HepG2 (cell line): ENCODE measurements at regions of chr3 and their contacts with region 1.

Region 1: DNA sequence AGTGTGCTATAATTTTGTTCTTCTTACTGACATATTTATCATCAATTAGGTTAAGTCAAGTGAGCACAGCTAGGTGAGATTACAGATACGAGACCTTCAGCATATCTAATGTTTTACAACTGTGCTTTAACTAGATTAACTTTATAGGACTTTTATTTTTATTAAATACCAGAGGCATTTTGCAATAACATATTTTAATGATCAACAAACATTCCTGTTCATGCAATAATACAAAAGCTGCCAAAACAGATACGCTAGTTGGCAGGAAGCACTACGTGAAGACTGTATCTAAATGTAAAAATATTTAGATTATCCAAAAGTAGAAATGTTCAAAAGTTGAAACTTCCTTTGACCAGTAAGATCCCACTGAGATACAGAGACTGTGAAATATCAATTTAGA is 139.1 kb downstream of the CBLB start:
- DNase-seq: no peak
- ATAC-seq: no peak
- H3K4me3 ChIP-seq: no peak overlapping the region
- H3K27ac ChIP-seq: no peak overlapping the region
- H3K4me1 ChIP-seq: no peaks in the 10 kb centered on the region
- H3K27me3 ChIP-seq: no peaks in the 10 kb centered on the region
- CTCF ChIP-seq: no peak
- EP300 ChIP-seq: no peak
- POLR2A ChIP-seq: no peak
- RAD21 ChIP-seq: no peak

Region 2: DNA sequence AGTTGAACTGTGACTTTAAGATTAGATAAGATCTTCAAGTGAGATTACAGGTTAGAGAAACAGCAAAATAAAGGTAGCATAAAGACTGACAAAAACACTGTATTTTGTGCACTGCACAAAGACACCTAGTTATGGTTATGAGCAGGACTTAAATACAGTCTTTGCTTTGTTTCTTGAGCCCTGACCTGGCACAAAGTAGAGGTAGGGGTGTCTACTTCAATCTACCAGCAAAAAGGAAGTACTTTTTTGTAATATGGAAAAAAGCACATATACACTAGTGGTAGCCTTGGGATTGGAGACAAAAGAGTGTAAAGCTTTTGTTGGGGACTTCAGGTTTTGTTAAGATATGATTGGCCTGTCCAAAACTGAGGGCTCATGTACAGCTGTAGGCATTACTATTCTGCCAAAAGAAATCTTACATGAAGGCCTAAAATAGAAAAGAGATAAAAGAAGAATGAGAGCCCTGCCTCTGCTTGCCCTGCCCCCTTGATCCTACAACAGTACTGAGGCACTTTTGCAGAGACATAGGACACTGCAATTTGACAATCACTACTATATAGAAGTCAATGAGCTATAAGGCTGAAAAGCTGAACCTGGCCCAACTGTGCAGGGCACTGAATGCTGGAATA is 55.1 kb before region 1 on chr3:
- CTCF ChIA-PET with region 1: no interaction called
- POLR2A ChIA-PET with region 1: no interaction called
- in situ Hi-C with region 1: loop called (anchors 5 kb)
- intact Hi-C with region 1: no loop called
- DNase-seq: no peak
- ATAC-seq: no peak
- H3K4me3 ChIP-seq: no peak overlapping the region
- H3K27ac ChIP-seq: no peak overlapping the region
- H3K4me1 ChIP-seq: no peaks in the 10 kb centered on the region
- H3K27me3 ChIP-seq: no peaks in the 10 kb centered on the region
- CTCF ChIP-seq: no peak
- EP300 ChIP-seq: no peak
- POLR2A ChIP-seq: no peak
- RAD21 ChIP-seq: no peak

Region 3: GRCh38 chr3:107128946-107129345 is 1399.3 kb after region 1 on chr3:
- CTCF ChIA-PET with region 1: no interaction called
- POLR2A ChIA-PET with region 1: no interaction called
- in situ Hi-C with region 1: no loop called
- intact Hi-C with region 1: no loop called
- DNase-seq: no peak
- ATAC-seq: no peak
- H3K4me3 ChIP-seq: no peak overlapping the region
- H3K27ac ChIP-seq: no peak overlapping the region
- H3K4me1 ChIP-seq: no peaks in the 10 kb centered on the region
- H3K27me3 ChIP-seq: no peaks in the 10 kb centered on the region
- CTCF ChIP-seq: no peak
- EP300 ChIP-seq: no peak
- POLR2A ChIP-seq: no peak
- RAD21 ChIP-seq: no peak

Region 4: DNA sequence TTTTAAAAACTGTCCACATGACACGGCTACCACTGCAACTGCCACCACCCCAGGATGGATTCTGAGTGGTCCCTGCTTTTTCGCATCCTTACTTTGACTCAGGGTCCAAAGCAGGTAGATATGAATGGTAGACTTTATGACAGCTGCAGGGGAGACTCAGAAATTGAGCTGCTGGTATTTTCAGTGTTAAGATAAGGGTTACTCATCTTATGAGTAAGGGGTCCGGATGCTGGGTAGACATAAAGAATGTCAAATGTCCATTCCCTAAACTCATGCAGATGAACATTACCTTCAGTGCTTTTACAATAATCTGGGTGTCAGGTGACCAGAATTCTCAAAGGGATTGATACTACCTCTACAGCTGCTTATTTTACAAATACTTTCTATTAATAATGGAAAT is 1767.2 kb after region 1 on chr3:
- CTCF ChIA-PET with region 1: no interaction called
- POLR2A ChIA-PET with region 1: no interaction called
- in situ Hi-C with region 1: no loop called
- intact Hi-C with region 1: no loop called
- DNase-seq: no peak
- ATAC-seq: no peak
- H3K4me3 ChIP-seq: no peak overlapping the region
- H3K27ac ChIP-seq: no peak overlapping the region
- H3K4me1 ChIP-seq: no peaks in the 10 kb centered on the region
- H3K27me3 ChIP-seq: no peaks in the 10 kb centered on the region
- CTCF ChIP-seq: no peak
- EP300 ChIP-seq: no peak
- POLR2A ChIP-seq: no peak
- RAD21 ChIP-seq: no peak